Heart right ventricle (tissue), 16 donors: ENCODE measurements at regions of chr9 and their contacts with region 1.

Region 1: GRCh38 chr9:84170521-84171141 is 169.9 kb downstream of the SLC28A3 start:
- DNase-seq: peak; percentile 83 to 90
- ATAC-seq: peak; percentile 96 to 99 (median 98)
- H3K4me3 ChIP-seq: no peak overlapping the region
- H3K27ac ChIP-seq: peak overlapping the region in 7 of 10 donors; percentile 35 to 63 (median 59)
- H3K4me1 ChIP-seq: peaks cover 0 to 33% (median 15%) of the 10 kb centered on the region in 9 donors
- H3K27me3 ChIP-seq: no peaks in the 10 kb centered on the region
- CTCF ChIP-seq: peak in 5 of 9 donors; percentile 14 to 37 (median 28)

Region 2: GRCh38 chr9:83937911-83938323 is 232.7 kb before region 1 on chr9:
- intact Hi-C with region 1: loop called in 3 of 10 experiments (anchors 5 to 10 kb)
- DNase-seq: peak in 1 of 2 donors; percentile 13
- ATAC-seq: peak in 6 of 8 donors; percentile 42 to 64 (median 55)
- H3K4me3 ChIP-seq: no peak overlapping the region
- H3K27ac ChIP-seq: no peak overlapping the region
- H3K4me1 ChIP-seq: peaks cover 0 to 35% (median 8%) of the 10 kb centered on the region in 9 donors
- H3K27me3 ChIP-seq: no peaks in the 10 kb centered on the region
- CTCF ChIP-seq: peak; percentile 57 to 82 (median 71)

Region 3: DNA sequence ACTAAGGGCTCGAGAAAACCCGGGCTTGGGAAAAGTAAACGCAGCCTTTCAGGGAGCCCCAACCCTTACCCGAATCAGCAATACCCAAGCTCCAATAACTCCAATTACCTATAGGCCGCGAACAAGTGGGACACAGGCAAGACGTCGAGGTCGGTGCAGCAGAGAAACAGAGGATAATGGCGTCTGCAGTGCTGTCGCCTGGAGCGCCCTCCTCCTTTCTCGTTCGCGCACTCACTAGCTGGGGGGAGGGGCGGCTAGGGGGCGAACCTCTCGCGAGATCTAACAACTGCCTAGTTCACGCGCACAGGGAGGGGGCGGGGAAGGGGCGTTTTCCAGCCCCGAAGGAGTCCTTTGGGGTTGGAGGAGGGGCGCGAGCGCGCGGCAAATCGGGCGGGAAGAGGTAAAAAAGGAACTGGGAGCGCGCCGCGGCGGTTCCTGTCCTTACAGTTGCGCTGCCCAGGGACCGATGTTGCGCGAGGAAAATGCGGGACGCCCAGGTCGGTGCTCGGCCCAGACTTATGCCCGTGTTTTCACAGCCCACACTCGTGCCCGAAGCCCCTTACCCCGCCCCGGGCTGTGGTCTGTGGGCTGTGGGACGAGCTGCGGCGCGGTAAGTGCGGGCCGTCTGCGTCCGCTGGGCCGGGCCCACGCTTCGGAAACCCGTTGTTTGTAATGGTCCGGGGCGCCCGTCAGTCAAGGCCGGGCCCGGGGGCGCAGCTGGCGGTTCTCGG is 190.1 kb before region 1 on chr9 and contains the start of gene RMI1:
- intact Hi-C with region 1: loop called in 9 of 10 experiments (anchors 2 to 10 kb)
- DNase-seq: peak; percentile 99 to 100
- ATAC-seq: peak; percentile 92 to 97 (median 94)
- H3K4me3 ChIP-seq: peak within 1 kb of the TSS; percentile 69 to 93 (median 83)
- H3K27ac ChIP-seq: peak within 1 kb of the TSS; percentile 93 to 100 (median 98)
- H3K4me1 ChIP-seq: peaks cover 0 to 52% (median 39%) of the 10 kb centered on the region in 9 donors
- H3K27me3 ChIP-seq: no peaks in the 10 kb centered on the region
- CTCF ChIP-seq: peak in 2 of 9 donors; percentile 11 to 48
- total RNA-seq, gene RMI1: 4.2 to 9.7 (median 5.8) TPM

Region 4: DNA sequence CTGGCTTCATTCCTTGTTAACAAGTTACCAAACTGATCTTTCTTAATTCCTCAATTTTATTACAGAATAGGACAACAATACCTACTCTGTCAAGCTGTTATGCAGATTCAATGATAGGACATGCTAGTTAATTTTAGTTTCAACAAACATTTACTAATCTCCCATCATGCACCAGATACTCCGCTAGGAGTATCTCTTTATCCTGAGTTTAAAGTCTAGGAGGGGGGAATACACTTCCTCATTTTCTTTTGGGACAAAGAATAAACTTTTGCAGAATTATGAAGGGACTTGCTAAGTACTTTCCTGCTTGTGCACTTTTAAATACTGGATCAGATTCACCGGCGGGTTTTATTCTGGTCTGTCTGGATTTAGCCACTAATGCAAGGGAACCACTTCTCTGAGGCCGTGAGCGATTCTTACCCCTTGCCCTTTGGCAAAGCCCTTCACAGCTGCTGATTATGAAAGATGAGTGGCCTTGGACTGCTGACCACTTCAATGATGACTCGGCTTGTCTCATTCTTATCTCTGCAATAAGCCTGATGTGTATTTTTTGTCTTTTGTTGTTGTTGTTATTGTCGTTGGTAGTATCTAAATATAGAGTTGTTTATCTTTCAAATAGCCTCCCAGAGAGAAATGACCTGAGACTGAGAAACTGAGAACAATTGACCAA is 116.2 kb before region 1 on chr9:
- intact Hi-C with region 1: loop called in 2 of 10 experiments (anchors 5 to 10 kb)
- DNase-seq: no peak
- ATAC-seq: no peak
- H3K4me3 ChIP-seq: no peak overlapping the region
- H3K27ac ChIP-seq: no peak overlapping the region
- H3K4me1 ChIP-seq: peaks cover 0 to 12% (median 7%) of the 10 kb centered on the region in 9 donors
- H3K27me3 ChIP-seq: no peaks in the 10 kb centered on the region
- CTCF ChIP-seq: no peak

Region 5: DNA sequence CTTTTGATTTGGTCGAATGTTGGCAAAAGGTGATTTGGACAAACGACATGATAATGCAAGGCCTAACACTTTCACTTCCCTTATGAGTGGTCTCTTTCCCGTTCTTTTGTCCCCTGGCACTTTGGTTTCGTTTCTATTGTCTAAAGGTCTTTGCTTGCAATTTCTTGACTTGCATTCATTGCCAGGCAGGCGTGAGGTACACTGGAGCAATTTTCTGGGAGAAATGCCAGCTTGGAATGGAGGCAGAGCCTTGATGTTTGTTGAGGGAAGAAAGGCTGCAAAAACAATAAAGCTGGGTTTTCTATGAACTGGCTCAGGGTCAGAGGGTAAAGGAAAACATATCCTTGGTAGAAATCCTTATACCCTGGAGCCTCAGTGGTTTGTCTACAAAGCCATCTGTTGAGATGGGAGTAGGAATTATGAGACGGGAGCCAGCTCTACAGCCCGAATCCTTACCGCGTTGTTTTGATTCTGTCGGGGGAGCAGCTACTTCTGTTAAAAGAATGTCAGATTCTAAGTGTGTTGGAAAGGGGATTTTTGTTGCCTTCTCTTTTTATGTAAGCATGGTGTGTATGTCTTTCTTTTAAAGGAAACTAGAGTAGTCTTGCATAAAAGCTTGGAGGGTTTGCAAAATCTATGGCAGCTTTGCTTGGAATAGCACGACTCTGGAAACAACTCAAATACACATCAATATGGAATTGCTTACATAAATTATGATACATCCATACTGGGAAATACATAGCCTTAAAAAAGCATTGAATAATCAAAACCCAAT is 31.1 kb before region 1 on chr9:
- intact Hi-C with region 1: no loop called
- DNase-seq: peak in 1 of 2 donors; percentile 59
- ATAC-seq: peak in 6 of 8 donors; percentile 60 to 77 (median 70)
- H3K4me3 ChIP-seq: no peak overlapping the region
- H3K27ac ChIP-seq: peak overlapping the region in 3 of 10 donors; percentile 2 to 33 (median 30)
- H3K4me1 ChIP-seq: peaks cover 0 to 28% (median 23%) of the 10 kb centered on the region in 9 donors
- H3K27me3 ChIP-seq: peaks cover 0 to 42% (median 25%) of the 10 kb centered on the region in 7 donors
- CTCF ChIP-seq: no peak

Region 6: DNA sequence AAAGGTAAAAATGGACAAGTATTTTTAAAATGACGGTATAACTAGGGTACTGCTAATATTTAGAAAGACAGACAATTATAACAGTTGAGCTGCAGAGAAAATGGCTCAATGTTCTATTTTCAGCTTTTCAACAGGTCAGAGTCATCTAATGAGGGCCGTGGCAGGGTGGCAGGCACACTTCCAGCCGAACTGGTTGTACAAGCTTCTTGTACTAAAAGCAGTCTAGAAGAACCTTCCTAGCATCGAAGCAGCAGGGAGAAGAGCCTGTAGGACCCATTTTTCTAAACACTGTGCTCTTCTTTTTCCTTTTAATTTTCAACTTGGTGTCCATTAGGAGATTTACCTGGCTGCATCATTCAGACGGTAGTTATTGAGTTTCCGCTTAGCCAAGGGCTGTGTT is 84.3 kb after region 1 on chr9:
- intact Hi-C with region 1: loop called in 4 of 10 experiments (anchors 5 to 10 kb)
- DNase-seq: peak in 1 of 2 donors; percentile 28
- ATAC-seq: peak in 5 of 8 donors; percentile 43 to 67 (median 65)
- H3K4me3 ChIP-seq: no peak overlapping the region
- H3K27ac ChIP-seq: no peak overlapping the region
- H3K4me1 ChIP-seq: peaks cover 0 to 4% (median 0%) of the 10 kb centered on the region in 9 donors
- H3K27me3 ChIP-seq: no peaks in the 10 kb centered on the region
- CTCF ChIP-seq: no peak